Activated CD4-positive, alpha-beta T cell treated with anti-CD3 and anti-CD28 coated beads for 36 hours (primary cell): ENCODE measurements at regions of chr12 and their contacts with region 1.

Region 1: GRCh38 chr12:101939856-101940265 is 62.5 kb downstream of the DRAM1 start:
- DNase-seq: peak; percentile 69
- ATAC-seq: peak; percentile 40
- H3K4me3 Mint-ChIP-seq: no peak overlapping the region
- H3K27ac Mint-ChIP-seq: no peak overlapping the region
- H3K4me1 Mint-ChIP-seq: peaks cover 12% of the 10 kb centered on the region
- H3K27me3 Mint-ChIP-seq: peaks cover 13% of the 10 kb centered on the region

Region 2: GRCh38 chr12:101501410-101501995 is 438.4 kb before region 1 on chr12:
- CTCF ChIA-PET with region 1: no interaction called
- POLR2A ChIA-PET with region 1: no interaction called
- intact Hi-C with region 1: no loop called
- DNase-seq: no peak
- ATAC-seq: no peak
- H3K4me3 Mint-ChIP-seq: no peak overlapping the region
- H3K27ac Mint-ChIP-seq: no peak overlapping the region
- H3K4me1 Mint-ChIP-seq: no peaks in the 10 kb centered on the region
- H3K27me3 Mint-ChIP-seq: peaks cover 5% of the 10 kb centered on the region

Region 3: DNA sequence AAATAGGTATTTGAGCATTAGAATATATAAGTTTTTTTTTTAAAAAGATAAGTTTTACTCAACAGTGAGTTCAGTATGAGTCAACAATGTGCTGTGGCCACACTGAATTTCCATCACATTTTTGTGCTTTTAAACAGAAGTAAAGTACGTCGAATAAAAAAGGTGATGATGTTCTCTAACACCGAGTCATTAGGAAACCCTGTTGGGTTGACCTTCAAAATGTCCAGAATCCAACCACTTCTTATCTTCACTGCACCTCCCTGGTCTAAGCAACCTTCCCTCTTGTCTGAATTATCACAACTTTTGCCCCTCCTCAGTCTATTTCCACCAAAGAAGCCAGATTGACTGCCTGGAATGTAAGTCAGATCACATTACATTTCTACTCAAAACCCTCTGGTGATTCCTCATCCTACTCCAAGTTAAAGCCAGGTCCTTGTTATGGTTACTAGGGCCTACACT is 157.6 kb before region 1 on chr12:
- CTCF ChIA-PET with region 1: no interaction called
- POLR2A ChIA-PET with region 1: no interaction called
- intact Hi-C with region 1: no loop called
- DNase-seq: peak; percentile 28
- ATAC-seq: peak; percentile 71
- H3K4me3 Mint-ChIP-seq: no peak overlapping the region
- H3K27ac Mint-ChIP-seq: peak overlapping the region; percentile 86
- H3K4me1 Mint-ChIP-seq: peaks cover 24% of the 10 kb centered on the region
- H3K27me3 Mint-ChIP-seq: no peaks in the 10 kb centered on the region

Region 4: DNA sequence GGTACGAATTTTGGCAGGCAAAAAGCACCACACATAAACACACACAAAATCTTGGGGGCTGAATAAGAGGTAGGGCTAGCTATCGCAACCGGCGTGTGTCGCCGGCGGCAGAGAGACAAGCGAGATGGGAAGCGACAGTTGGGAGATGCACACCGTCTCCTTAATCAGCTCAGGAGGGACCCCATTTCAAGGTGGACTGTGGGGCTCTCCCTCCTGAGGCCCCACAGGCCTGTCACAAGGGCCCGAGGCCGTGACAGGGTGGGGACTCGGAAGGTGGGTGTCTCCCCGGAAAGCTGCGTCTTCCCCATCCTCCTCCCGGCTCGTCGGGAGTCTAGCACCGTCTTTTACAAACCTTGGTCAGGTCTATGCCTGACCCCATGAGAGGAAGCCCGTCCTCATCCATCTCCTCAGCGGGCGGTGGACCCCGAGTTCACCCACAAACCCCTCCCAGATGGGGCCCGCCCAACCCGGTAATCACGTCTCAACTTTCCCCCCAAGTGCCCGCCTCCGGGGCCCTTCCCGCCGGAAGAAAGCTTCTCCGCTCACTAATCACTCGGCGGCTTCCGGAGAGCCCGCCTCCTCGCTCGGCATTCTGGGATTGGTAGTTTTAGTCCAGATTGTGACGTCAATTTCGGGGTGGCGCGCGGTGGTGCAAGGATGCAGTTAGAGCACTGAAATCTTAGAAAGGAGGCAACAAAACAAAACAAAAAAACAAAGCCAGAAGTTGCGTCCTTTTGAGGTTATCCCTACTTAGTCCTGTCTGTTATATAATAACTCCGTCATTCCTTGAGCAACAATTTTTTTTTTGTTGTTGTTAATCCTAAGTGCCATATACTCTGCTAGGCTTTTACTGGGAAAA is 121.9 kb after region 1 on chr12 and contains the start of gene WASHC3:
- CTCF ChIA-PET with region 1: no interaction called
- POLR2A ChIA-PET with region 1: no interaction called
- intact Hi-C with region 1: loop called in 1 of 2 experiments (anchors 2 kb)
- DNase-seq: peak; percentile 98
- ATAC-seq: peak; percentile 93
- H3K4me3 Mint-ChIP-seq: peak within 1 kb of the TSS; percentile 94
- H3K27ac Mint-ChIP-seq: peak within 1 kb of the TSS; percentile 99
- H3K4me1 Mint-ChIP-seq: peaks cover 29% of the 10 kb centered on the region
- H3K27me3 Mint-ChIP-seq: no peaks in the 10 kb centered on the region
- total RNA-seq, gene WASHC3: 36.1 to 64.4 TPM

Region 5: GRCh38 chr12:102484428-102484958 is 544.6 kb after region 1 on chr12:
- CTCF ChIA-PET with region 1: interaction called, 6 read pairs
- POLR2A ChIA-PET with region 1: no interaction called
- intact Hi-C with region 1: loop called (anchors 1 kb)
- DNase-seq: peak; percentile 75
- ATAC-seq: peak; percentile 87
- H3K4me3 Mint-ChIP-seq: peak overlapping the region; percentile 41
- H3K27ac Mint-ChIP-seq: peak overlapping the region; percentile 95
- H3K4me1 Mint-ChIP-seq: peaks cover 32% of the 10 kb centered on the region
- H3K27me3 Mint-ChIP-seq: peaks cover 1% of the 10 kb centered on the region

Region 6: DNA sequence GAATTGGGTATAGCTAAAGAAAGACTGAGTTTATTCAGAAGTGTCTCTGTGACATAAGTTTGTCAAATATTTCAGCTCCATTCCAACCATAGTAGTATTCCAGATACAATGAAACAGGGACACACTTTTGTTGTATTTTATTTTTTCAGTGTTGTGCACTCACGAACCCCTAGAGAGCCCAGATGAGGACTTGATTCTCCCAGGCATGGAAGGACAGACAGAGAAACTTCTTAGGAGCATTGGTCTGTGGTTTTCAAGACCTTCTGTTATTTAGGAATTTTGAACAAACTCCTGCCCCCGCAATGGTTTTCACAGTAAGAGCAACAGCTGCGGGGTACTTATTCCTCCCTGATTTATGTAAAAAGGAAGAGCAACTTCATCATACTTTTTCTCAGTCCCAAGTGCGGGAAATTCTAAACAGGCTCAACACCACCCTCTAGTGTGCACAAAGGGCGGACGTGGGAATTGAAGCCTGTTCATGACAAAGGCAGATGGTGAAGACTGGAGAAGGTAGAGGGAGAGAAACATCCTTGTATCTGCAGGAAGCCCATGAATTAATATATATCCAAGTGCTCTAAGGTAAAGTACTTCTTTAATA is 829.6 kb after region 1 on chr12:
- CTCF ChIA-PET with region 1: interaction called, 6 read pairs
- POLR2A ChIA-PET with region 1: no interaction called
- intact Hi-C with region 1: loop called in 1 of 2 experiments (anchors 1 kb)
- DNase-seq: peak; percentile 57
- ATAC-seq: peak; percentile 60
- H3K4me3 Mint-ChIP-seq: no peak overlapping the region
- H3K27ac Mint-ChIP-seq: no peak overlapping the region
- H3K4me1 Mint-ChIP-seq: no peaks in the 10 kb centered on the region
- H3K27me3 Mint-ChIP-seq: peaks cover 3% of the 10 kb centered on the region

Region 7: GRCh38 chr12:102879144-102879763 is 939.4 kb after region 1 on chr12:
- CTCF ChIA-PET with region 1: no interaction called
- POLR2A ChIA-PET with region 1: no interaction called
- intact Hi-C with region 1: loop called in 1 of 2 experiments (anchors 5 kb)
- DNase-seq: peak; percentile 50
- ATAC-seq: peak; percentile 81
- H3K4me3 Mint-ChIP-seq: no peak overlapping the region
- H3K27ac Mint-ChIP-seq: no peak overlapping the region
- H3K4me1 Mint-ChIP-seq: no peaks in the 10 kb centered on the region
- H3K27me3 Mint-ChIP-seq: peaks cover 14% of the 10 kb centered on the region